Heart left ventricle (tissue), 16 donors: ENCODE measurements at regions of chr22 and their contacts with region 1.

Region 1: GRCh38 chr22:20079745-20080444 is at the start of gene DGCR8:
- DNase-seq: peak; percentile 96 to 97 (median 96)
- ATAC-seq: peak; percentile 95 to 98 (median 96)
- H3K4me3 ChIP-seq: peak within 1 kb of the TSS; percentile 48 to 92 (median 84)
- H3K27ac ChIP-seq: peak within 1 kb of the TSS; percentile 75 to 94 (median 86)
- H3K4me1 ChIP-seq: peaks cover 3 to 49% (median 43%) of the 10 kb centered on the region in 12 donors
- H3K27me3 ChIP-seq: no peaks in the 10 kb centered on the region
- CTCF ChIP-seq: peak in 1 of 12 donors; percentile 19
- POLR2A ChIP-seq: peak in 1 of 2 donors; percentile 74
- total RNA-seq, gene DGCR8: 8.8 to 22.1 (median 13.0) TPM

Region 2: GRCh38 chr22:19874307-19875060 is 205.4 kb before region 1 on chr22:
- intact Hi-C with region 1: no loop called
- DNase-seq: peak in 4 of 5 donors; percentile 26 to 57 (median 40)
- ATAC-seq: peak; percentile 12 to 57 (median 46)
- H3K4me3 ChIP-seq: no peak overlapping the region
- H3K27ac ChIP-seq: peak overlapping the region in 2 of 12 donors; percentile 22 to 25
- H3K4me1 ChIP-seq: peaks cover 0 to 16% (median 7%) of the 10 kb centered on the region in 12 donors
- H3K27me3 ChIP-seq: no peaks in the 10 kb centered on the region
- CTCF ChIP-seq: no peak
- POLR2A ChIP-seq: no peak

Region 3: DNA sequence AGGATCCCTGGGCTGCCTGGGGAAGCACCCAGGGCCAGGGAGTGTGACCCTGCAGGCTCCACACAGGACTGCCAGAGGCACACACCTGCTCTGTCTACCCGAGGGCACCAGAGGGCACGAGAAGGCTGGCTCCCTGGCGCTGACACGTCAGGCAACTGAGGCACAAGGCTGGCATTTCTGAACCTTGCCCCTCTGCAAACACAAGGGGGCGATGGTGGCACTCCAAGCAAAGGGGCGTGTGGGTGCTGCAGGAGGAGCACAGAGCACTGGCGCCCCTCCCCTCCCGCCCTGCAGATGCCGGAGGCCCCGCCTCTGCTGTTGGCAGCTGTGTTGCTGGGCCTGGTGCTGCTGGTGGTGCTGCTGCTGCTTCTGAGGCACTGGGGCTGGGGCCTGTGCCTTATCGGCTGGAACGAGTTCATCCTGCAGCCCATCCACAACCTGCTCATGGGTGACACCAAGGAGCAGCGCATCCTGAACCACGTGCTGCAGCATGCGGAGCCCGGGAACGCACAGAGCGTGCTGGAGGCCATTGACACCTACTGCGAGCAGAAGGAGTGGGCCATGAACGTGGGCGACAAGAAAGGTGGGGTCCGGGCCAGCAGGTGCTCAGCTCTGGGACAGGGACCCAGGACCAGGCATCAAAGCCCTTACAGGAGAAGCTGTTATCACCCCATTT is 117.5 kb before region 1 on chr22:
- intact Hi-C with region 1: loop called in 2 of 10 experiments (anchors 10 kb)
- DNase-seq: peak; percentile 57 to 80 (median 77)
- ATAC-seq: peak; percentile 44 to 63 (median 54)
- H3K4me3 ChIP-seq: no peak overlapping the region
- H3K27ac ChIP-seq: no peak overlapping the region
- H3K4me1 ChIP-seq: peaks cover 0 to 44% (median 25%) of the 10 kb centered on the region in 12 donors
- H3K27me3 ChIP-seq: no peaks in the 10 kb centered on the region
- CTCF ChIP-seq: peak; percentile 36 to 64 (median 54)
- POLR2A ChIP-seq: no peak

Region 4: GRCh38 chr22:20002636-20003035 is 77.3 kb before region 1 on chr22:
- intact Hi-C with region 1: no loop called
- DNase-seq: peak in 1 of 5 donors; percentile 17
- ATAC-seq: no peak
- H3K4me3 ChIP-seq: no peak overlapping the region
- H3K27ac ChIP-seq: peak overlapping the region in 10 of 12 donors; percentile 23 to 71 (median 54)
- H3K4me1 ChIP-seq: peaks cover 0 to 41% (median 27%) of the 10 kb centered on the region in 12 donors
- H3K27me3 ChIP-seq: no peaks in the 10 kb centered on the region
- CTCF ChIP-seq: no peak
- POLR2A ChIP-seq: no peak

Region 5: GRCh38 chr22:20016734-20017621 is 62.9 kb before region 1 on chr22 and contains the start of gene ARVCF:
- intact Hi-C with region 1: loop called in 3 of 10 experiments (anchors 5 kb)
- DNase-seq: peak; percentile 94 to 96 (median 95)
- ATAC-seq: peak; percentile 30 to 75 (median 70)
- H3K4me3 ChIP-seq: peak within 1 kb of the TSS; percentile 59 to 93 (median 80)
- H3K27ac ChIP-seq: peak within 1 kb of the TSS in 6 of 12 donors; percentile 17 to 80 (median 50)
- H3K4me1 ChIP-seq: peaks cover 3 to 47% (median 26%) of the 10 kb centered on the region in 12 donors
- H3K27me3 ChIP-seq: peaks cover 0 to 20% (median 0%) of the 10 kb centered on the region in 9 donors
- CTCF ChIP-seq: peak in 7 of 12 donors; percentile 9 to 41 (median 21)
- POLR2A ChIP-seq: peak in 1 of 2 donors; percentile 30
- total RNA-seq, gene ARVCF: 21.2 to 46.6 (median 33.3) TPM

Region 6: DNA sequence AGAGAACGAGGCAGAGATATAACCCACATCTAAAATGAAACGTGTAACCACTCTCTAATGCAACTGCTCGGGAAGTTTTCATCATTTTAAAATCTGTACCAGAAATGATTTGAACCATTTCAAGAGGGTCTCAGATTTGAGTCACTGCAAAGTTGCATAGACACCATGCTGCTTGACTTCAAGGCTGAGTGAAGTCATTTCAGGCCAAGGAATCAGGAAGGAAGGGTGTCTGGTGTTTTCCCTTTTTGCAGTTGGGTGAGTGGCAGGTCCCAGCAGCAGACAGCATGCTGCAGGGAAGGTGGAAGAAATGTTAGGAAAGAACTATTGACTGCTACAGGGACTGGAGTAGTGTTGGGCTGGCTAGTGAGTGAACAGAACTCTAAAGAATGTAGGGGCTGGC is 42.5 kb before region 1 on chr22:
- intact Hi-C with region 1: loop called in 2 of 10 experiments (anchors 5 to 10 kb)
- DNase-seq: no peak
- ATAC-seq: no peak
- H3K4me3 ChIP-seq: no peak overlapping the region
- H3K27ac ChIP-seq: no peak overlapping the region
- H3K4me1 ChIP-seq: peaks cover 3 to 50% (median 29%) of the 10 kb centered on the region in 12 donors
- H3K27me3 ChIP-seq: no peaks in the 10 kb centered on the region
- CTCF ChIP-seq: no peak
- POLR2A ChIP-seq: no peak

Region 7: DNA sequence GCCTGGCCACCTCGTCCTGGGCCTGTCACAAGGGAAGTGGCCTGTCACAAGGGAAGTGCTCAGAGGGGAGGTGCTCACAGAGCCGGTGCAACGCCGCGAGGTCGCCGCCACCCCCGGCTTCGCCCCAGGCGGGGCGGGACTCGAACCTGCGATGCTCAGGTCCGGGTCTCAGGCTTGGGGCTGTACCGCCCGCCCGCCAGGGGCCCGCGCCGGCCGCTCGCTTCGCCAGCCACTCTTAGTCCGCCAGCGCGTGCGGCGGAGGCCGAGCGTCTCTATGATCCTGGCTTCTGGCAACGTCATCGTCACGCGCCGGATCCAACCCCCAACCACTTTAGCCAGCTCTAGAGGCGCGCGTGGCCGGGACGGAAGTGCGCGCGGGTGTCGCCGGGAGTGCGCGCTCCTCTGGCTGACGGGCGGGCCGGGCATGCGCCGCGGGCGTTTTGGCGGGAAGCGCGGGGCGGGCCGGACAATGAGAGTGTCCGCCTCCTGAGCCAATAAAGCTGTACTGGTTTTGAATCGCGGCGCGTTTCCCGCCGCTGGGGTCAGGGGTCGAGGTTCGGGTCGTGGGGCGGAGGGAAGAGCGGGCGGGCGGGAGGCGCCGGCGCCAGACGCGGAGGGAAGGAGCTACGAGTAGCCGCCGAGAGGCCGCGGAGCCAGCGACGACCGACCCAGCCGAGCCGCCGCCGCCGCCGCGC is 37.2 kb after region 1 on chr22 and contains the start of gene TRMT2A:
- intact Hi-C with region 1: loop called in 4 of 10 experiments (anchors 1 to 5 kb)
- DNase-seq: peak; percentile 98 to 99 (median 98)
- ATAC-seq: peak; percentile 92 to 95 (median 92)
- H3K4me3 ChIP-seq: peak within 1 kb of the TSS; percentile 61 to 99 (median 85)
- H3K27ac ChIP-seq: peak within 1 kb of the TSS; percentile 49 to 93 (median 86)
- H3K4me1 ChIP-seq: peaks cover 0 to 52% (median 30%) of the 10 kb centered on the region in 12 donors
- H3K27me3 ChIP-seq: no peaks in the 10 kb centered on the region
- CTCF ChIP-seq: peak in 6 of 12 donors; percentile 20 to 57 (median 41)
- POLR2A ChIP-seq: peak in 1 of 2 donors; percentile 74
- total RNA-seq, gene TRMT2A: 18.2 to 31.3 (median 20.2) TPM

Region 8: GRCh38 chr22:20555276-20555675 is 475.4 kb after region 1 on chr22:
- intact Hi-C with region 1: no loop called
- DNase-seq: peak in 1 of 5 donors; percentile 23
- ATAC-seq: no peak
- H3K4me3 ChIP-seq: no peak overlapping the region
- H3K27ac ChIP-seq: peak overlapping the region in 5 of 12 donors; percentile 13 to 25 (median 15)
- H3K4me1 ChIP-seq: peaks cover 25 to 81% (median 65%) of the 10 kb centered on the region in 12 donors
- H3K27me3 ChIP-seq: no peaks in the 10 kb centered on the region
- CTCF ChIP-seq: no peak
- POLR2A ChIP-seq: no peak